Naive thymus-derived CD4-positive, alpha-beta T cell (primary cell): ENCODE measurements at regions of chr19 and their contacts with region 1.

Region 1: DNA sequence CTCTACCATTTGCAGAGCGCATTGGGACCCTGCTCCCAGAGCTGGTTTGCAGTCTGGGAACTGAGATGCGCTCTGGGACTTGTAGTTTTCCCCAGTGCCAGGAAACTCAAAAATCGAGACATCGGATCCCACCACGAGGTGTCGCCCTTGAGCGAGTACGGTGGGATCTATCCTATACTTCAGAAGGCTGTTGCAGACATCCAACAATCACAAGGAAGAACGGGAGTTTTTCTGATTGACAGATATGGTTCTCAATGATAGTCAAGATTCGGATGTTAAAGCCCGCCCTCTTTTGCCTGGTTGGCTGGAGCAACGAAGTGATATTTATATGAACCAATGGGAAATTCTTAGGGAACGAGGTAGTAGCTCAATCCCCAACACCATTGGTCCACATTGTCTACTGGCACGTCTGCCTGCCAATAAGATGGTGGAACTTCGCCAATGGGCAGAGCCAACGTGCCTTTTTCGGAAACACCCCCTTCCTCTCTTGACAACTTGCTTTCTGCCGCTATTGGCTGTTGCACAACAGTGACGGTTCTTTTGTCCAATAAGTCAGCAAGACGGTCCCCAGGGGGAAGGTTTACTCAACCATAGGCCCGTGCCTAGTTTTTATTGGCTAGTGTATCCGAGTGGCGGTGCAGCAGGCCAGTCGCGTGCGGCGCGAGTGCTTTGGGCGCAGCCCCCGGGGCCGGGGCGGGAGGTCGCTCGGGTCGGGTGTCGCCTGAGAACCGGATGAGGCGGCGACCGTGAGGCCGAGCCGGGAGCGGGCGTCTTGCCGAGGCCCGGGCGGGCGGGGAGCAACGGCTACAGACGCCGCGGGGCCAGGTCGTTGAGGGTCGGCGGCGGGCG is at the start of gene DNM2:
- DNase-seq: peak; percentile 90 to 100 (median 99)
- ATAC-seq: peak; percentile 90
- H3K4me3 ChIP-seq: peak within 1 kb of the TSS; percentile 77
- H3K4me3 Mint-ChIP-seq: peak within 1 kb of the TSS; percentile 91 to 98 (median 96)
- H3K27ac ChIP-seq: peak within 1 kb of the TSS; percentile 87
- H3K27ac Mint-ChIP-seq: peak within 1 kb of the TSS; percentile 85 to 96 (median 93)
- H3K4me1 ChIP-seq: peaks cover 23 to 34% of the 10 kb centered on the region in 2 donors
- H3K4me1 Mint-ChIP-seq: peaks cover 19 to 48% (median 35%) of the 10 kb centered on the region in 7 donors
- H3K27me3 ChIP-seq: no peaks in the 10 kb centered on the region
- H3K27me3 Mint-ChIP-seq: no peaks in the 10 kb centered on the region
- total RNA-seq, gene DNM2: 238 to 340 (median 269) TPM

Region 2: DNA sequence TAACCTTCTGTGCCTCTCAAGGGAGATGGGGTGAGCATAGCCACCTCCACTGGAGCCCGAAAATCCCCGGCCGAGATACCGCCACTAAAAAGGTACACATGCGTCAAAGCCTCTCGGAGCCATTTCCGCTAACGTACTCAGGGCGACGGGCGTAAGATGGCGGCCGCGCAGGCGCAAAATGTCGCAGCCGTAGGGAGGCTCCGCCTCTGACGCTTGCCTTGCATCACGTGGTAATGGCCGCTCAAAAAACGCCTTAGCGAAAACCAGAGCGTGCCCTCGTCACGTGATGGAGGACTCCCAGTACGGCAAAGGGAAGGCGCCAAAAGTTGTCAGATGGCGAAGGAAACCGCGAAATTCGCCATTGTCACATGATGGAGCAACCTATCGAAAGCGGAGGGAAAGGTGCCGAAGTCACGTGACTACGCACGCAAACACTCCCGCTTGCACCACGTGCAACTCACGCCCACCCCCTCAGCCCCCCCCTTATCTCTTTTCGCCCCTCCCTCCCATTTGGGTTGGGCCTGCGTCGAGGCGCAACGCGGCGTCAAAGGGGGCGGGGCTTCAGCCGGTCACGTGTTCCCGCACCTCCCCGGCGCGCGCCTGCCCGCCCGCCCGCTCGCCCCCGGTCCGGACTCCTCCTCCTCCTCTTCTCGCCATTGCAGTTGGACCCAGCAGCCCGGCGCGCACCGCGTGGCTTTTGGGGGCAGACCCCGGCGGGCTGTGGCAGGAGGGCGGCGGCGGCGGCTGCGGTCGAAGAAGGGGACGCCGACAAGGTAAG is 63.7 kb before region 1 on chr19 and contains the start of gene ILF3:
- CTCF ChIA-PET with region 1: no interaction called
- POLR2A ChIA-PET with region 1: interaction called, 3 read pairs
- intact Hi-C with region 1: loop called (anchors 1 kb)
- DNase-seq: peak; percentile 97 to 100 (median 100)
- ATAC-seq: peak; percentile 89
- H3K4me3 ChIP-seq: peak within 1 kb of the TSS; percentile 87
- H3K4me3 Mint-ChIP-seq: peak within 1 kb of the TSS; percentile 93 to 98 (median 95)
- H3K27ac ChIP-seq: peak within 1 kb of the TSS; percentile 100
- H3K27ac Mint-ChIP-seq: peak within 1 kb of the TSS; percentile 94 to 99 (median 98)
- H3K4me1 ChIP-seq: peaks cover 32 to 38% of the 10 kb centered on the region in 2 donors
- H3K4me1 Mint-ChIP-seq: peaks cover 17 to 61% (median 42%) of the 10 kb centered on the region in 7 donors
- H3K27me3 ChIP-seq: no peaks in the 10 kb centered on the region
- H3K27me3 Mint-ChIP-seq: peaks cover 0 to 3% (median 0%) of the 10 kb centered on the region in 5 donors
- total RNA-seq, gene ILF3: 346 to 515 (median 368) TPM

Region 3: DNA sequence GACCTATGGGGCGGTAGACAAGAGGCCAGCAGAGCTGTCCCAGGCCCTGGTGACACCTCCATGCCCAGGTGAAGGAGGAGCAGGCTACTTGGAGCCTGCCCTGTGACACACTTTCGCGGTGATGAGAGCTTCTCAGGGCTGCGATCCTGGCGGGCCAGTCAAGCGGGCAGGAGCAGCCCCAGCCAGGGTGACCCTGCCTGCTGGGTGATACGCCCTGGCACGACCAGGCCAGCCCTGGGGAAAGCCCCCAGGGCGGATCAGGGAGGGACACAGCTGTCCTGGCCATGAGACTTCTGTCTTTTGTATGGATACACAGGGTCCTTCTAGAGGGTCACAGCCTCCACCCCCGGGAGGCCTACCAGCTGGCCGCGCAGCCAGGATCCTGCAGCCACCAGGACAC is 13.3 kb after region 1 on chr19:
- CTCF ChIA-PET with region 1: interaction called, 5 read pairs
- POLR2A ChIA-PET with region 1: interaction called, 5 read pairs
- intact Hi-C with region 1: loop called (anchors 1 kb)
- DNase-seq: no peak
- ATAC-seq: no peak
- H3K4me3 ChIP-seq: no peak overlapping the region
- H3K4me3 Mint-ChIP-seq: peak overlapping the region in 9 of 10 donors; percentile 30 to 85 (median 78)
- H3K27ac ChIP-seq: peak overlapping the region; percentile 59
- H3K27ac Mint-ChIP-seq: peak overlapping the region; percentile 91 to 99 (median 97)
- H3K4me1 ChIP-seq: peaks cover 23 to 24% of the 10 kb centered on the region in 2 donors
- H3K4me1 Mint-ChIP-seq: peaks cover 26 to 71% (median 53%) of the 10 kb centered on the region in 7 donors
- H3K27me3 ChIP-seq: no peaks in the 10 kb centered on the region
- H3K27me3 Mint-ChIP-seq: no peaks in the 10 kb centered on the region

Region 4: GRCh38 chr19:10797541-10798256 is 80.1 kb after region 1 on chr19:
- CTCF ChIA-PET with region 1: interaction called, 4 read pairs
- POLR2A ChIA-PET with region 1: no interaction called
- intact Hi-C with region 1: loop called in 1 of 2 experiments (anchors 1 kb)
- DNase-seq: peak; percentile 27 to 89 (median 64)
- ATAC-seq: peak; percentile 90
- H3K4me3 ChIP-seq: peak overlapping the region; percentile 39
- H3K4me3 Mint-ChIP-seq: peak overlapping the region; percentile 56 to 82 (median 74)
- H3K27ac ChIP-seq: peak overlapping the region; percentile 80
- H3K27ac Mint-ChIP-seq: peak overlapping the region; percentile 93 to 97 (median 94)
- H3K4me1 ChIP-seq: peaks cover 25 to 39% of the 10 kb centered on the region in 2 donors
- H3K4me1 Mint-ChIP-seq: peaks cover 8 to 51% (median 16%) of the 10 kb centered on the region in 7 donors
- H3K27me3 ChIP-seq: no peaks in the 10 kb centered on the region
- H3K27me3 Mint-ChIP-seq: no peaks in the 10 kb centered on the region

Region 5: GRCh38 chr19:10864538-10864899 is 146.9 kb after region 1 on chr19:
- CTCF ChIA-PET with region 1: interaction called, 39 read pairs
- POLR2A ChIA-PET with region 1: interaction called, 13 read pairs
- intact Hi-C with region 1: loop called (anchors 1 kb)
- DNase-seq: peak; percentile 54 to 82 (median 70)
- ATAC-seq: peak; percentile 90
- H3K4me3 ChIP-seq: no peak overlapping the region
- H3K4me3 Mint-ChIP-seq: peak overlapping the region in 3 of 10 donors; percentile 3 to 53 (median 30)
- H3K27ac ChIP-seq: no peak overlapping the region
- H3K27ac Mint-ChIP-seq: peak overlapping the region in 8 of 9 donors; percentile 3 to 80 (median 42)
- H3K4me1 ChIP-seq: peaks cover 4 to 7% of the 10 kb centered on the region in 2 donors
- H3K4me1 Mint-ChIP-seq: peaks cover 11 to 28% (median 15%) of the 10 kb centered on the region in 7 donors
- H3K27me3 ChIP-seq: no peaks in the 10 kb centered on the region
- H3K27me3 Mint-ChIP-seq: no peaks in the 10 kb centered on the region

Region 6: GRCh38 chr19:10960314-10961072 is 242.9 kb after region 1 on chr19 and contains the start of gene SMARCA4:
- CTCF ChIA-PET with region 1: no interaction called
- POLR2A ChIA-PET with region 1: no interaction called
- intact Hi-C with region 1: loop called in 1 of 2 experiments (anchors 1 kb)
- DNase-seq: peak; percentile 96 to 100 (median 99)
- ATAC-seq: peak; percentile 96
- H3K4me3 ChIP-seq: peak within 1 kb of the TSS; percentile 89
- H3K4me3 Mint-ChIP-seq: peak within 1 kb of the TSS; percentile 84 to 94 (median 90)
- H3K27ac ChIP-seq: peak within 1 kb of the TSS; percentile 89
- H3K27ac Mint-ChIP-seq: peak within 1 kb of the TSS; percentile 79 to 94 (median 93)
- H3K4me1 ChIP-seq: peaks cover 28 to 33% of the 10 kb centered on the region in 2 donors
- H3K4me1 Mint-ChIP-seq: peaks cover 22 to 42% (median 34%) of the 10 kb centered on the region in 7 donors
- H3K27me3 ChIP-seq: no peaks in the 10 kb centered on the region
- H3K27me3 Mint-ChIP-seq: no peaks in the 10 kb centered on the region
- total RNA-seq, gene SMARCA4: 96.0 to 126 (median 104) TPM